ENCODE measurements at regions of chr9 and their contacts with region 1.

Region 1: DNA sequence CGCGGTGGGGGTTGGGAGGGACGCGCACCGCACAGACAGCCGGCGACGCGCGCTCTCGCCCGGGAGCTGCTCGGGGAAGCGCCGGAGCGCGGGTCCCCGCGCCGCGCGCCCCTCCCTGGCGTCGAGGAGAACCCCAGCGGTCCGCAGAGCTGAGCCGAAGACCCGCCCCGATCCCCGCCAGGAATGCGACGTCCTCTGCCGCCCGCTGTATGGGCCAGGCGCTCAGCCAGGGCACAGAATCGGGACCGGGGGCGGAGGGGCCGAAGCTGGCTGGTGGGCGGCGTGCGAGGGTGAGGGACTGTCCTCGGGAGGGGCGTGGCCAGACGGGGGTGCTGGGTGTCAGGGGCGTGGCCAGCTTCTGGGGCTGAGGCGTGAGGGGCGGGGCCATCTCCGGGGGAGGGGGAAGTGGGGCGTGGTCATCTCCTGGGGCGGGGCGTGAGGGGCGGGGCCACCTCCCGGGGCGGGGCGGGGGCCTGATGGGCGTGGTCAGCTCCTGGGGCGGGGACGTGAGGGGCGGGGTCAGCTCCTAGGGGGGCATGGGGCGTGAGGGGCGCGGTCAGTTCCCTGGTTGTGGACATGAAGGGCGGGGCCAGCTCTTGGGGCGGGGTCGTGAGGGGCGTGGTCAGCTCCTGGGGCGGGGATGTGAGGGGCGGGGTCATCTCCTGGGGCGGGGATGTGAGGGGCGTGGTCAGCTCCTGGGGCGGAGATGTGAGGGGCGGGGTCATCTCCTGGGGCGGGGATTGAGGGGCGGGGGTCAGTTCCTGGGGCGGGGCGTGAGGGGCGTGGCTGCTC is 965 bp downstream of the PTGDS start:
- DNase-seq: peak; percentile 57
- H3K4me3 Mint-ChIP-seq: no peak overlapping the region
- H3K27ac Mint-ChIP-seq: no peak overlapping the region
- H3K4me1 Mint-ChIP-seq: peaks cover 7% of the 10 kb centered on the region
- H3K27me3 Mint-ChIP-seq: no peaks in the 10 kb centered on the region

Region 2: DNA sequence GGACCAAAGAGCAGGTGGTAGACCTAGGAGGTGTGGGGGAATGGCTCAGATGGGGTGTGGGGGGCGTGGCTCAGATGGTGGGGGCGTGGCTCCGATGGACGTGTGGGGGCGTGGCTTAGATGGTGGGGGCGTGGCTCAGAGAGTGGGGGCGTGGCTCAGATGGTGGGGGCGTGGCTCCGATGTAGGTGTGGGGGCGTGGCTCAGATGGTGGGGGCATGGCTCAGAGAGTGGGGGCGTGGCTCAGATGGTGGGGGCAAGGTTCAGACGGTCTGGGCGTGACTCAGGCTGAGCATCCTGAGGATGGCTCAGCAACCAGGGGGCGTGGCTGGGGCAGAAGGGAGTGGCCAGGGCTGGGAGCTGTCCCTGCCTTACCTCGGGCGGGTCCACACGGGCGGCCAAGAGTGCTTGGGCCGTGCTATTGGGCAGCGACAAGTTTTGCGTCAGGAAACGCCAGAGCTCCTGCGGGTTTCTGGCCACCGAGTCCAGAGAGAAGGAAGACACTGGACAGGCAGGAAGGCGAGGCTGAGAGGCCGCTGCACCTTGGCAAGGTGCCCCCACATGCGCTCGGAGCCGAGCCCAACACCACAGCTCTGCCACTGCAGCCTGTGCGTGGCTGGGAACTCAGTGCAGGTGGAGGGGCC is 43.8 kb after region 1 on chr9:
- intact Hi-C with region 1: loop called (anchors 1 kb)
- DNase-seq: peak; percentile 63
- H3K4me3 Mint-ChIP-seq: no peak overlapping the region
- H3K27ac Mint-ChIP-seq: no peak overlapping the region
- H3K4me1 Mint-ChIP-seq: no peaks in the 10 kb centered on the region
- H3K27me3 Mint-ChIP-seq: no peaks in the 10 kb centered on the region

Region 3: DNA sequence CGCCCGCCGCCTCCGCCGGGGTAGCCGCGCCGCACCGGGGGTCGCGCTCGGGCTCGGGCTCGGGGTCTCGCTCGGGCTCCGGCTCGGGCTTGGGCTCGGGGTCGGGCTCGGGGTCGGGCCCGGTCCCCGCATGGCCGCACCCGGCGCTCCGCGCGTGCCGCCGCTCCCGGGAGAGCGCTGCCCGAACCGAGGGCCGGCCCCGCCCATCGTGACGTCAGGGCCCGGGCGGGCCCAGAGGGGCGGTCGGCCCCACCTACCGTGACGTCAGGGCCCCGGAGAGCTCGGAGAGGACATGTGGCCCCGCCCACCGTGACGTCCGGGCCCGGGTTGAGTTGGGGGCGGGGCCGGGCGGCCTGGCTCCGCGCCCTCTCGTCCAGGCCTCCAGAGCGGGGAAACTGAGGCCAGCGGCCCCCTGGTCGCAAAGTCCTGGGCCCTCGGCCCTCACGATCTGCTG is 480.9 kb after region 1 on chr9 and contains the start of gene NSMF:
- intact Hi-C with region 1: loop called (anchors 10 kb)
- DNase-seq: peak; percentile 93
- H3K4me3 Mint-ChIP-seq: peak within 1 kb of the TSS; percentile 13
- H3K27ac Mint-ChIP-seq: peak within 1 kb of the TSS; percentile 65
- H3K4me1 Mint-ChIP-seq: peaks cover 11% of the 10 kb centered on the region
- H3K27me3 Mint-ChIP-seq: no peaks in the 10 kb centered on the region
- total RNA-seq, gene NSMF: 56.1 and 57.6 TPM in 2 replicates

Region 4: GRCh38 chr9:137531099-137531765 is 553.0 kb after region 1 on chr9:
- intact Hi-C with region 1: no loop called
- DNase-seq: no peak
- H3K4me3 Mint-ChIP-seq: no peak overlapping the region
- H3K27ac Mint-ChIP-seq: no peak overlapping the region
- H3K4me1 Mint-ChIP-seq: peaks cover 21% of the 10 kb centered on the region
- H3K27me3 Mint-ChIP-seq: peaks cover 3% of the 10 kb centered on the region